ENCODE measurements at regions of chr11 and their contacts with region 1.

Region 1: GRCh38 chr11:1652771-1653540 is 23.4 kb downstream of the KRTAP5-5 start:
- DNase-seq: peak; percentile 66 to 97 (median 76)
- ATAC-seq: peak; percentile 96
- H3K4me3 ChIP-seq: no peak overlapping the region
- H3K27ac ChIP-seq: no peak overlapping the region
- H3K4me1 ChIP-seq: peaks cover 0 to 5% of the 10 kb centered on the region in 2 donors
- H3K27me3 ChIP-seq: peaks cover 0 to 43% of the 10 kb centered on the region in 2 donors
- CTCF ChIP-seq: peak; percentile 96 to 99

Region 2: DNA sequence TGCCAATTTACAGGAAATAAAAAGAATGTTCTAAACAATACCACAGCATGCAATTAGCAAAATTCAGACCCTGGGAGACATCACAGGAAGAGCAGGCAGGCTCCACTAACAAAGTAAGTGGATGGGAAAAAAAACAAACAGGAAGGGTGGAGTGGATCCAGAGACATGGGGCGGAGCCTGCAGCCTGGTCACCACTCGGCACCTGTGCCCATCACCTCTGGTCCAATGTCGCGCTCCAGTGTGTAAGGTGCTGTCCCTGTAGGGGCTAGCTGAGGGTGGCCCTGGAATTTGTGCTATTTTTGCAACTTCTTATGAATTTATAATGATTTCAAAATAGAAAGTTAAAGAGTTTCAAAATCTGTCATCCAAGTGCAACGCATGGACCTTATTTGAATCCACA is 155.4 kb before region 1 on chr11:
- intact Hi-C with region 1: no loop called
- DNase-seq: peak in 1 of 4 donors; percentile 29
- ATAC-seq: no peak
- H3K4me3 ChIP-seq: no peak overlapping the region
- H3K27ac ChIP-seq: peak overlapping the region in 1 of 2 donors; percentile 41
- H3K4me1 ChIP-seq: peaks cover 0 to 24% of the 10 kb centered on the region in 2 donors
- H3K27me3 ChIP-seq: no peaks in the 10 kb centered on the region
- CTCF ChIP-seq: no peak

Region 3: GRCh38 chr11:1837171-1838076 is 184.5 kb after region 1 on chr11:
- intact Hi-C with region 1: loop called in 1 of 2 experiments (anchors 10 kb)
- DNase-seq: peak in 3 of 4 donors; percentile 72 to 89 (median 82)
- ATAC-seq: peak; percentile 24
- H3K4me3 ChIP-seq: no peak overlapping the region
- H3K27ac ChIP-seq: no peak overlapping the region
- H3K4me1 ChIP-seq: peaks cover 5 to 46% of the 10 kb centered on the region in 2 donors
- H3K27me3 ChIP-seq: peaks cover 0 to 11% of the 10 kb centered on the region in 2 donors
- CTCF ChIP-seq: peak; percentile 72 to 85